Naive thymus-derived CD4-positive, alpha-beta T cell (primary cell): ENCODE measurements at regions of chr16 and their contacts with region 1.

Region 1: DNA sequence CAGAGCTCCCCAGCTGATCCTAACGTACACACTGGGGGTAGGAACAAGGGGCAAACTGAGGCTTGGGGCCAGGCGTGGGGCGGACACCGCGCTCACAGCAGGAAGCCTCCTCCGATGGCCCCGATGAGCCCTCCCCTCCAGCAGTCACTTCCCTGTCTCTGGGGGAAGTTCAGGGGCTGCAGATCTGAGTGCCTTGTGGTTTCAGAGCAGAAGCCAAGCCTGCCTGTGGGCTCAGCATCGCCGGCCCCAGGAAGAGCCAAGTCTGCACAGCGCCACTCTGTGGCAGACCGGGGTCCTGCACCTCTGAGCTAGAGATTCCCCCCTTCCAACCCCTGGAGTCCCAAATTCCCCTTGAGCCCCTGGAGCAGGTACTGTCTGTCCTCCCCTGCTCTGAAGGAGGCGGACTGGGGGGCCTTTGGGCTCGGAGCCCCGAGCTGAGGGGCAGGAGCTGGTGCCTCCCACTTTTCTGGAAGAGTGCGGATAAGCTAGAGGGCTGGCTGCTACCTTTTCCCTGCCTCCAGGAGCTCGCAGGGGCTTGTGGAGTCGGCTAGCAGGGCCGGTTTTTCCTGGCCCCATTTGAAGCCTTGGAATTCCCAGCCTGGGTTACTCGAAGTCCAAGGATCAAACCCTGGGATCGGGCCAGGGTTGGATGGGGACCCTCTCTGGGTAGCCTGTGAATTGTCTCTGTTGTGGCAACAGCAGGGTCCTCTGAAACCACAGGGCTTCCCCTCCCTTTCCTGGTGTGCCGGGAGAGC is 2.9 kb downstream of the GSE1 start:
- DNase-seq: peak; percentile 53 to 81 (median 73)
- ATAC-seq: peak; percentile 87
- H3K4me3 ChIP-seq: peak overlapping the region; percentile 28
- H3K4me3 Mint-ChIP-seq: peak overlapping the region; percentile 62 to 87 (median 80)
- H3K27ac ChIP-seq: no peak overlapping the region
- H3K27ac Mint-ChIP-seq: peak overlapping the region in 1 of 9 donors; percentile 32
- H3K4me1 ChIP-seq: peaks cover 22 to 37% of the 10 kb centered on the region in 2 donors
- H3K4me1 Mint-ChIP-seq: peaks cover 23 to 46% (median 28%) of the 10 kb centered on the region in 7 donors
- H3K27me3 ChIP-seq: peaks cover 0 to 2% of the 10 kb centered on the region in 2 donors
- H3K27me3 Mint-ChIP-seq: peaks cover 0 to 17% (median 7%) of the 10 kb centered on the region in 5 donors

Region 2: GRCh38 chr16:85393674-85394483 is 222.2 kb before region 1 on chr16:
- CTCF ChIA-PET with region 1: interaction called, 5 read pairs
- POLR2A ChIA-PET with region 1: no interaction called
- intact Hi-C with region 1: loop called in 1 of 2 experiments (anchors 1 kb)
- DNase-seq: peak; percentile 26 to 73 (median 51)
- ATAC-seq: peak; percentile 82
- H3K4me3 ChIP-seq: no peak overlapping the region
- H3K4me3 Mint-ChIP-seq: no peak overlapping the region
- H3K27ac ChIP-seq: no peak overlapping the region
- H3K27ac Mint-ChIP-seq: no peak overlapping the region
- H3K4me1 ChIP-seq: no peaks in the 10 kb centered on the region
- H3K4me1 Mint-ChIP-seq: peaks cover 0 to 2% (median 0%) of the 10 kb centered on the region in 7 donors
- H3K27me3 ChIP-seq: no peaks in the 10 kb centered on the region
- H3K27me3 Mint-ChIP-seq: peaks cover 0 to 3% (median 0%) of the 10 kb centered on the region in 5 donors

Region 3: DNA sequence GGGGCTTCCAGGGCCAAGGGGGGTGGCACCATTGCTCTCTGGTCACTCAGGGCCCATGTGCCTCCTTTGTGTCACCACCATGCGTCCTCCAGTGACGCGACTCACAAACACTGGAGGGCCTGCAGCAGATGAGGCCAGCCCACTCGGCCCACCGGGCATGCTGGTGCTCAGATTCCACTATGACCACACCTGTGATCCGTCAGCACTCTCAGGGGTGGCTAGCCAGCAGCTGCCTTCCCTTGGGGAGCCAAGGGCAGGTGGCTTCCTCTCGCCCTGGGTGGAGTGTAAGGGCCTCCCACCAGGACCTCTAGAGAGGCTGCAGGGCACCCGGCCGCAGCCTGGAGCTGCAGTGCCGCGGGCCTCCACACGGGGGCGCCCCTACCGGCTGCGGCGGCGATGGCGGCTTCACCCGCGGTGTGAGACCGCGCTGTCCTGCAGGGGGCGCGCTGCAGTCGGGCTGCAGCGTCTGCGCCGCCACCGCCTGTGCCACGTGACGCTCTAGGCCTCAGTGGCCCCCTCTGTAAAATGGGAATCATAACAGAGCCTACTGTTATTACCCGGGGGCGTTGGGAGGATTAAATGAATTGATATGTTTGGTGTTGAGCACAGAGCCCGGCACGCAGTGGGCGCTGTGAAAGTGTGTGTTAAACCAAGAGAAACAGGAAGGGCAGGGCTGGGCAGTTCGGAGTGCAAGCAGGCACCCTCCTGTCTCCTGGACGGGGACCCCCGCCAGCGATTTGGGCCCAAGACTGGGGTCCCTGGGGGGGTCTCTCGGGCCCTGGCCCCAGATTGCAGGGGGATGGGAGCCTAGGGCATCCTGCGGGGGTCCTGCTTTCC is 195.3 kb before region 1 on chr16:
- CTCF ChIA-PET with region 1: interaction called, 14 read pairs
- POLR2A ChIA-PET with region 1: interaction called, 4 read pairs
- intact Hi-C with region 1: loop called (anchors 1 kb)
- DNase-seq: peak; percentile 29 to 90 (median 71)
- ATAC-seq: peak; percentile 95
- H3K4me3 ChIP-seq: no peak overlapping the region
- H3K4me3 Mint-ChIP-seq: no peak overlapping the region
- H3K27ac ChIP-seq: no peak overlapping the region
- H3K27ac Mint-ChIP-seq: no peak overlapping the region
- H3K4me1 ChIP-seq: peaks cover 0 to 10% of the 10 kb centered on the region in 2 donors
- H3K4me1 Mint-ChIP-seq: peaks cover 0 to 10% (median 0%) of the 10 kb centered on the region in 7 donors
- H3K27me3 ChIP-seq: no peaks in the 10 kb centered on the region
- H3K27me3 Mint-ChIP-seq: peaks cover 0 to 4% (median 0%) of the 10 kb centered on the region in 5 donors

Region 4: GRCh38 chr16:85430523-85431421 is 185.3 kb before region 1 on chr16:
- CTCF ChIA-PET with region 1: no interaction called
- POLR2A ChIA-PET with region 1: no interaction called
- intact Hi-C with region 1: no loop called
- DNase-seq: peak in 1 of 9 donors; percentile 4
- ATAC-seq: no peak
- H3K4me3 ChIP-seq: no peak overlapping the region
- H3K4me3 Mint-ChIP-seq: no peak overlapping the region
- H3K27ac ChIP-seq: no peak overlapping the region
- H3K27ac Mint-ChIP-seq: no peak overlapping the region
- H3K4me1 ChIP-seq: no peaks in the 10 kb centered on the region
- H3K4me1 Mint-ChIP-seq: peaks cover 0 to 3% (median 0%) of the 10 kb centered on the region in 7 donors
- H3K27me3 ChIP-seq: no peaks in the 10 kb centered on the region
- H3K27me3 Mint-ChIP-seq: peaks cover 0 to 8% (median 5%) of the 10 kb centered on the region in 5 donors

Region 5: DNA sequence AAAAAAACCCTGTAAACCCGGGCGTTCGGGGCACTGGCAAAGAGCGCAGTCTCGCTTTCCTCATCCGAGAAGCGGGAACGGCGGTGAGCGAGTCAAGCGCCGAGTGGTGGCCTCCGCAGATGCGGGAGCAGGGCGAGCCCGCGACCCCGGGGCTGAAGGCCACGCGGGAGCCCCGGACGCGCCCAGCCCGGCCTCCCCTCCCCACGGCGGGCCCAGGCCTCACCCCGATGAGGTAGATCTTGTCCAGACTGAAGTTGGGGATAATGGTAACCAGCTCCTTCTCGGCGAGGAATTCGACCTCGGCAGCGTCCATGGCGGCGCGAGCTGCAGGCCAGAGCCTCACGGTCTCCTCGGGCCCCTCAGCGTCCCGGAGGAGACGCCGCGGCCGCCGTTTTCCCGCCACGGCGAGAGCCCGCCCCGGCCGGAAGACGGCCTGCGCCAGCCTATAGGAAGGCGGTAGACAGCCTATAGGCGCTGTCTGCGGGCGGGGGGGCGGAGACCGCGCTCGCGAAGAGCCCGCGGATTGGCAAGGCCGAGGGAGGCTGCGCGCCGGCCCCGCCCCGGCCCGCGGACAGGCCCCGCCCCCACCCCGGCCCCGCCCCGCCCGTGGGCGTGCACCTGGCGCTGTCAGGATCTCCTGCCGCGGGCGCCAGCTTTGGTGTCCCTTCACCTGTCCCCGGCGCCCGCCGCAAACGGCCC is 72.7 kb after region 1 on chr16 and contains the start of gene GINS2:
- CTCF ChIA-PET with region 1: no interaction called
- POLR2A ChIA-PET with region 1: no interaction called
- intact Hi-C with region 1: loop called (anchors 2 to 5 kb)
- DNase-seq: peak; percentile 77 to 90 (median 89)
- ATAC-seq: peak; percentile 100
- H3K4me3 ChIP-seq: peak within 1 kb of the TSS; percentile 69
- H3K4me3 Mint-ChIP-seq: peak within 1 kb of the TSS; percentile 64 to 85 (median 76)
- H3K27ac ChIP-seq: peak within 1 kb of the TSS; percentile 51
- H3K27ac Mint-ChIP-seq: peak within 1 kb of the TSS in 3 of 9 donors; percentile 46 to 63 (median 56)
- H3K4me1 ChIP-seq: peaks cover 5% of the 10 kb centered on the region in 2 donors
- H3K4me1 Mint-ChIP-seq: peaks cover under 1 to 21% (median 7%) of the 10 kb centered on the region in 7 donors
- H3K27me3 ChIP-seq: no peaks in the 10 kb centered on the region
- H3K27me3 Mint-ChIP-seq: peaks cover 0 to 8% (median 6%) of the 10 kb centered on the region in 5 donors
- total RNA-seq, gene GINS2: 1.0 to 43.6 (median 1.9) TPM